ENCODE measurements at regions of chr16 and their contacts with region 1.

Region 1: DNA sequence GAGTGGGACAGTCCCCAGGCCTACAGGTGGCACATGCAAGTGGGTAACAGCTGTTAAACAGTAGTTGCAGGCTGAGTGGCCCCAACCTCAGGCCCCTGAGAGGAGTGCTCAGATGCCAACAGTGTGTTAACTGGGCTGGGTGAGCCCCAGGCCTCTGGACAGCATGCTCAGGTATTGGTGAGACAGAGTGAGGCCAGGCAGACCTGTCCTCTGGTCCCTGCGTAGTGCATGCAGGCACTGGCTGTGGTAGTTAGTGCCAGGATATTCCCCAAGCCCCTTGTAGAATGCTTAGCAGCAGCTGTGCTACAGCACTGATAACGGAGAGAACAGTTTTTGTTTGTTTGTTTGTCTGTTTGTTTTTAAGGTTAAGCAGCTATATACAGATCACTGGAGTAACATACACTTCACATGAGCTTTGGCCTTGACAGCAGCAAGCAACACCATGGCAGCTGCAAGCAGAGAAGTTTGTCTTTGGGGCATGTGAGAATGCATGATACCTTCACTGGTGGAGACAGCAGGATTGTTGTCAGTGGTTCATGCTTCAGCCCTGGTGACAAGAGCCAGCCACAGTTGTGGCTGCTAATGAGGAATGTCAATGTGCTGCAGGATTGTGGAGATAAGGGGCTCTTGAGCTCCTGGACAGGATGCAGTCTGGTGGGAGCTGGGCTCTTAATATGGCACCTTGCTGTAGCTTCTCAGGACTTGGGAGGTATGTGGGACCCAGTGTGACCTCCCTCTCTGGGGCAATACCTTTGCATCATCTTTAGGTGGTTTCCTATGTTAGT is 614.4 kb downstream of the CDH11 start:
- DNase-seq: no peak
- H3K4me3 ChIP-seq: no peak overlapping the region
- H3K27ac ChIP-seq: no peak overlapping the region
- H3K4me1 ChIP-seq: no peaks in the 10 kb centered on the region
- H3K27me3 ChIP-seq: no peaks in the 10 kb centered on the region
- CTCF ChIP-seq: no peak
- EP300 ChIP-seq: no peak
- POLR2A ChIP-seq: no peak

Region 2: DNA sequence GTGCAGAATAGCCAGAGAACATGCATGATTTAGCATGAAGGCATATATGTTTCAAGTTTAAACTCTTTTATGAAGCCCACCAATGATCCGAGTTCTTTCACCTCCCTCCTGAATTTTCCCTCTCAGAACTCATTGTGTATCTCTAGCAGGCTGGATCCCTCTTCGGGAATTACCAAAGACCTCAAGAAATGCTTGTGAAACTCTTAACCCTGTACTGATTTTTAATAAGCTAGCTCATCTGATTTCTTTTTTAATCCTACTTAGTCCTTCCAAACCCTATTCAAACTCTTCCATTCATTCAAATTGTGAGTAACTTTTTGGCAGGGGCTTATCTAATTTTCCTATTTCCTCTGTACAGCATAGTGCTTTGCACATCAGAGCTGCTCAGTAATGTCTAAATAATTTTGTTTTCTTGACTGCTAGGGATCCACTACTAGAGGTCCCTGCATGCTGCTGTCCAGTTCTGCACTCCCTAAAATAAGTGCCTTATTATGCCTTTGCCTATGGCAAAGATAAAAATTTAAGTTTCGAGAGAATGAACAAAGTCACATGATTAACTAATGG is 109.4 kb before region 1 on chr16:
- intact Hi-C with region 1: no loop called
- DNase-seq: no peak
- H3K4me3 ChIP-seq: no peak overlapping the region
- H3K27ac ChIP-seq: no peak overlapping the region
- H3K4me1 ChIP-seq: no peaks in the 10 kb centered on the region
- H3K27me3 ChIP-seq: no peaks in the 10 kb centered on the region
- CTCF ChIP-seq: no peak
- EP300 ChIP-seq: no peak
- POLR2A ChIP-seq: no peak

Region 3: DNA sequence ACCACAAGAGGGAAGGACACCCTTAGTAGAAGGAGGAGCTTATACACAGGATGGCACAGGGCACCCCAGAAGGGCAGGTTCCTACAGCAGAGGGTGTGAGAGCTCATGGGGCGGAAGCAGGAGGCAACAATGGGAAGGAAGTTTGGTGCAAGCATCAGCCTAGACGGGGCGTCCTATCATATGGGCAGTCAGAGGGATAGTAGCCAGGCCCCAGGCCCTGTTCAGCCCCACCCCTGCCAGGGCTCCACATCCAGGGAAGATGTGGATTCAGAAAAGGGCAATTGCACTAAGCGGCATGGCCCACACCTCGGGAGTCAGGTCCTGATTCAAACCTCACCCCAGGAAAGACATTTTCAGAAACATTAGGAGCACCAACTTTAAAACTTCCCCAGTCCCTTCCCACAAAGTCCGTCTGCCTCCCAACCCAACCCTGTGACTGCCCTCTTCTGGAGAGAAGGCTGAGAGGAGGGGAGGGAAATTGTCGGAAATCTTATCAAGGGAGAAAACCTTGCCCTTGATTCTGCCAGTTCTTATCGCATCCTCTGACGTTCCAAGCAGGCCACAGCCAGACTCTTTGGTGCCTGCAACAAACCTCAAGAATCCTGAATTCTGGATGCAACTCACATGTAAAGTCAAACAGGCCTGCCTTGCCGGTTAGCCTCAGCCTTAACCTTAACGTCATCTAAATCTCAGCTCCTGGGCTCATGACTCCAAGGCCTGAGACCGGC is 1660.3 kb after region 1 on chr16:
- intact Hi-C with region 1: loop called in 1 of 4 experiments (anchors 5 kb)
- DNase-seq: peak in 1 of 5 donors; percentile 31
- H3K4me3 ChIP-seq: no peak overlapping the region
- H3K27ac ChIP-seq: no peak overlapping the region
- H3K4me1 ChIP-seq: peaks cover 2% of the 10 kb centered on the region
- H3K27me3 ChIP-seq: no peaks in the 10 kb centered on the region
- CTCF ChIP-seq: peak in 1 of 3 donors; percentile 34
- EP300 ChIP-seq: no peak
- POLR2A ChIP-seq: no peak

Measured in ovary (tissue), 10 donors.